Common myeloid progenitor, CD34-positive (primary cell): ENCODE measurements at regions of chrX and their contacts with region 1.

Region 1: GRCh38 chrX:65697915-65698796 is 30.7 kb downstream of the MSN start:
- DNase-seq: peak; percentile 74 to 94 (median 91)
- H3K4me3 ChIP-seq: peak overlapping the region in 6 of 7 experiments; percentile 23 to 71 (median 44)
- H3K27ac ChIP-seq: peak overlapping the region; percentile 56 to 85
- H3K4me1 ChIP-seq: peaks cover 39 to 88% (median 78%) of the 10 kb centered on the region in 4 experiments
- H3K27me3 ChIP-seq: no peaks in the 10 kb centered on the region

Region 2: DNA sequence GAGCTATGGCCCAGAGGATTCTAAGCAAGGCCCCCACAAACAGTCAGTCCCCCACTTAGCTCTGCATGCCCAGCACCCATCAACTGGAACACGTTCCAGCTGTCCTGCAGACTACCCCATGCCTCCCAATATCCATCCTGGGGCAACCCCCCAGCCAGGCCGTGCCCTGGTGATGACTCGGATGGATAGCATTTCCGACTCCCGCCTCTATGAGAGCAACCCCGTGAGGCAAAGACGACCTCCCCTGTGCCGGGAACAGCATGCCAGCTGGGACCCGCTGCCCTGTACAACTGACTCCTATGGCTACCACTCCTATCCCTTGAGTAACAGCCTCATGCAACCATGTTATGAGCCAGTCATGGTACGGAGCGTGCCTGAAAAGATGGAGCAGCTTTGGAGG is 195.5 kb before region 1 on chrX:
- CTCF ChIA-PET with region 1: no interaction called
- POLR2A ChIA-PET with region 1: no interaction called
- DNase-seq: no peak
- H3K4me3 ChIP-seq: no peak overlapping the region
- H3K27ac ChIP-seq: no peak overlapping the region
- H3K4me1 ChIP-seq: no peaks in the 10 kb centered on the region
- H3K27me3 ChIP-seq: peaks cover 0 to 2% (median 0%) of the 10 kb centered on the region in 5 experiments

Region 3: GRCh38 chrX:65595460-65595876 is 102.7 kb before region 1 on chrX:
- CTCF ChIA-PET with region 1: interaction called, 9 read pairs
- POLR2A ChIA-PET with region 1: interaction called, 10 read pairs
- DNase-seq: peak; percentile 93 to 99 (median 97)
- H3K4me3 ChIP-seq: peak overlapping the region in 2 of 7 experiments; percentile 16 to 31
- H3K27ac ChIP-seq: peak overlapping the region in 1 of 2 experiments; percentile 71
- H3K4me1 ChIP-seq: peaks cover 16 to 64% (median 23%) of the 10 kb centered on the region in 4 experiments
- H3K27me3 ChIP-seq: peaks cover 0 to 4% (median 0%) of the 10 kb centered on the region in 5 experiments

Region 4: DNA sequence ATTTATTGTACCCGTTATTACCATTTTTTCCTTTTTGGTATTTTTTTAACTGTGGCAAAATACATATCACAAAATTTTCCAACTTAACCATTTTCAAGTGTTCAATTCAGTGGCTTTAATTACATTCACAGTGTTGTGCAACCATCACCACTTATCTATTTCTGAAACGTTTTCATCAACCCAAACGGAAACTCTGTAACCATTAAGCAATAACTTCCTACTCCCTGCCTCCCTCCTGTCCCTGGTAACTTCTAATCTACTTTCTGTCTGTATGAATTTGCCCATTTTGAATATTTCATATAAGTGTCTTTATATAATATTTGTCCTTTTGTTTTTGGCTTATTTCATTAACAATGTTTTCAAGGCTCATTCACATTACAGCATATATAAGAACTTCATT is 88.1 kb before region 1 on chrX:
- CTCF ChIA-PET with region 1: no interaction called
- POLR2A ChIA-PET with region 1: no interaction called
- DNase-seq: peak; percentile 56 to 88 (median 82)
- H3K4me3 ChIP-seq: no peak overlapping the region
- H3K27ac ChIP-seq: no peak overlapping the region
- H3K4me1 ChIP-seq: peaks cover 4 to 32% (median 25%) of the 10 kb centered on the region in 4 experiments
- H3K27me3 ChIP-seq: peaks cover 0 to 5% (median 0%) of the 10 kb centered on the region in 5 experiments

Region 5: GRCh38 chrX:65667503-65668376 is 30.4 kb before region 1 on chrX and contains the start of gene MSN:
- CTCF ChIA-PET with region 1: interaction called, 11 read pairs
- POLR2A ChIA-PET with region 1: interaction called, 13 read pairs
- DNase-seq: peak; percentile 46 to 74 (median 54)
- H3K4me3 ChIP-seq: peak within 1 kb of the TSS; percentile 67 to 82 (median 73)
- H3K27ac ChIP-seq: peak within 1 kb of the TSS; percentile 89 to 96
- H3K4me1 ChIP-seq: peaks cover 18 to 40% (median 20%) of the 10 kb centered on the region in 4 experiments
- H3K27me3 ChIP-seq: peaks cover 0 to 5% (median 0%) of the 10 kb centered on the region in 5 experiments

Region 6: DNA sequence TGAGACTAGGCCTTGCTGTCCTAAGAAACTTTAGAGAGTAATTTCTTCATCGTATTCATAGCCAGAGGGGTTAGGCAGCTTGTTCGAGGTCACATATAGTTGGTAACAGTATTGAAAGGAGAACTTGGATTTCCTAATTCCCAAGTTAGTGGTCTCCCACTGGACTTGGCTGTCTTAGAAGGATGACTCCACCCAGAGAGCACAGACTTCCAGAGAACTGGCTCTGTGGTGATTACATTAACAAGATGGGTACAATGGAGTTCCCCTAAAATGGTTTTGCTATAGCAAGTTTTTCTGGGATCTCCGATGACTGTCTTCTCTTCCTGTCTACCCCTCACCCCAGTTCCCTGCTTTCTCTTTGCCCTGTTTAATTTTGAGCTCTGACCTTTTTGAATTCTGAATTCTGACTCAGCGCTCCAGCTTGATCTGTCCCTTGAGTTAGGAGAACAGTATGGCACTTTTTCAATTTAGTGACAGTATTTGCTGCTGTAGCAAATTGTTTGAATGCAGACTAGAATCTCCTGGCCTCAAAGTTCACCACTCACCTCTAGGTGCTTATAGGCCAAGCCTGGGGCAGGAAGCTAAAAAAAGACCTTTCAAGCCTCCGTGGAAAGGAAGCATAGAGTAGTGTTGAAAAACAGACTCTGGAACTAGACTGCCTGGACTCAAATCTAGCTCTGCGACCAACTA is 23.8 kb before region 1 on chrX:
- CTCF ChIA-PET with region 1: interaction called, 11 read pairs
- POLR2A ChIA-PET with region 1: interaction called, 7 read pairs
- DNase-seq: peak in 2 of 3 donors; percentile 39 to 43
- H3K4me3 ChIP-seq: peak overlapping the region in 2 of 7 experiments; percentile 3 to 48
- H3K27ac ChIP-seq: peak overlapping the region in 1 of 2 experiments; percentile 59
- H3K4me1 ChIP-seq: peaks cover 29 to 82% (median 52%) of the 10 kb centered on the region in 4 experiments
- H3K27me3 ChIP-seq: peaks cover 0 to 10% (median 0%) of the 10 kb centered on the region in 5 experiments

Region 7: GRCh38 chrX:65874765-65875164 is 176.6 kb after region 1 on chrX:
- CTCF ChIA-PET with region 1: no interaction called
- POLR2A ChIA-PET with region 1: no interaction called
- DNase-seq: no peak
- H3K4me3 ChIP-seq: no peak overlapping the region
- H3K27ac ChIP-seq: no peak overlapping the region
- H3K4me1 ChIP-seq: peaks cover 0 to 10% (median 2%) of the 10 kb centered on the region in 4 experiments
- H3K27me3 ChIP-seq: peaks cover 0 to 16% (median 0%) of the 10 kb centered on the region in 5 experiments